ENCODE measurements at regions of chr18 and their contacts with region 1.

Region 1: GRCh38 chr18:12391618-12392165 is 14.7 kb upstream of the AFG3L2 start:
- DNase-seq: peak; percentile 63 to 80 (median 66)
- ATAC-seq: peak; percentile 90
- H3K4me3 ChIP-seq: no peak overlapping the region
- H3K27ac ChIP-seq: no peak overlapping the region
- H3K4me1 ChIP-seq: peaks cover 4 to 6% of the 10 kb centered on the region in 2 experiments; a peak in 3 of 5 replicates
- H3K27me3 ChIP-seq: no peaks in the 10 kb centered on the region
- CTCF ChIP-seq: peak; percentile 86 to 97 (median 96)
- EP300 ChIP-seq: no peak
- POLR2A ChIP-seq: no peak
- RAD21 ChIP-seq: peak; percentile 96 to 98

Region 2: GRCh38 chr18:12271376-12272235 is 120.1 kb before region 1 on chr18:
- CTCF ChIA-PET with region 1: no interaction called
- POLR2A ChIA-PET with region 1: no interaction called
- in situ Hi-C with region 1: no loop called
- intact Hi-C with region 1: no loop called
- DNase-seq: peak; percentile 87 to 89 (median 88)
- ATAC-seq: peak; percentile 99
- H3K4me3 ChIP-seq: peak overlapping the region; percentile 48
- H3K27ac ChIP-seq: peak overlapping the region; percentile 64
- H3K4me1 ChIP-seq: peaks cover 3 to 15% of the 10 kb centered on the region in 2 experiments; a peak in 3 of 5 replicates
- H3K27me3 ChIP-seq: no peaks in the 10 kb centered on the region
- CTCF ChIP-seq: peak; percentile 62 to 93 (median 83)
- EP300 ChIP-seq: no peak
- POLR2A ChIP-seq: peak; percentile 72
- RAD21 ChIP-seq: peak; percentile 58 to 61

Region 3: GRCh38 chr18:12287684-12288402 is 103.8 kb before region 1 on chr18:
- CTCF ChIA-PET with region 1: interaction called, 4 read pairs
- POLR2A ChIA-PET with region 1: no interaction called
- in situ Hi-C with region 1: no loop called
- intact Hi-C with region 1: loop called (anchors 2 kb)
- DNase-seq: peak; percentile 66 to 85 (median 80)
- ATAC-seq: peak; percentile 82
- H3K4me3 ChIP-seq: peak overlapping the region; percentile 33
- H3K27ac ChIP-seq: no peak overlapping the region
- H3K4me1 ChIP-seq: peaks cover 16 to 21% of the 10 kb centered on the region in 2 experiments; a peak in 4 of 5 replicates
- H3K27me3 ChIP-seq: no peaks in the 10 kb centered on the region
- CTCF ChIP-seq: no peak
- EP300 ChIP-seq: no peak
- POLR2A ChIP-seq: no peak
- RAD21 ChIP-seq: no peak

Region 4: DNA sequence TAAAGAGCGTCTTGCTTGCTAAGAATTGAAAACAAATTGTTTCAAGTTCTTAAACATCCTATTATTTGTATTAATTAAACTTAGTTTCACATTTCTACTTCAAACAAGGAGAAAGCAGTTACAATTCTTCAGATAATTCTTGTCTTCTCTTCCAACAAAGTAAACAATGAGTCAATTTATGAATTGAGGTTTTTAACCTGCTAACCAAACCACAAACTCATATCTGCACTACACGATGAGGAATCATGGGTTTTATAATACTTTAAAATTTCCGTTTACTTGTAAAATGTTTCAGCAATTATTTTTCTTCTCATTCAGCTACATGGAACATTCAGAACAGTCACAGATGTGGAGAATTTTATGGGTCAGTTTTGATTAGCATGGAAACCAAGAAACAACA is 152.0 kb after region 1 on chr18:
- CTCF ChIA-PET with region 1: no interaction called
- POLR2A ChIA-PET with region 1: no interaction called
- in situ Hi-C with region 1: no loop called
- intact Hi-C with region 1: loop called (anchors 1 kb)
- DNase-seq: no peak
- ATAC-seq: no peak
- H3K4me3 ChIP-seq: no peak overlapping the region
- H3K27ac ChIP-seq: no peak overlapping the region
- H3K4me1 ChIP-seq: no peaks in the 10 kb centered on the region; a peak in 1 of 5 replicates
- H3K27me3 ChIP-seq: no peaks in the 10 kb centered on the region
- CTCF ChIP-seq: no peak
- EP300 ChIP-seq: no peak
- POLR2A ChIP-seq: no peak
- RAD21 ChIP-seq: no peak

Region 5: DNA sequence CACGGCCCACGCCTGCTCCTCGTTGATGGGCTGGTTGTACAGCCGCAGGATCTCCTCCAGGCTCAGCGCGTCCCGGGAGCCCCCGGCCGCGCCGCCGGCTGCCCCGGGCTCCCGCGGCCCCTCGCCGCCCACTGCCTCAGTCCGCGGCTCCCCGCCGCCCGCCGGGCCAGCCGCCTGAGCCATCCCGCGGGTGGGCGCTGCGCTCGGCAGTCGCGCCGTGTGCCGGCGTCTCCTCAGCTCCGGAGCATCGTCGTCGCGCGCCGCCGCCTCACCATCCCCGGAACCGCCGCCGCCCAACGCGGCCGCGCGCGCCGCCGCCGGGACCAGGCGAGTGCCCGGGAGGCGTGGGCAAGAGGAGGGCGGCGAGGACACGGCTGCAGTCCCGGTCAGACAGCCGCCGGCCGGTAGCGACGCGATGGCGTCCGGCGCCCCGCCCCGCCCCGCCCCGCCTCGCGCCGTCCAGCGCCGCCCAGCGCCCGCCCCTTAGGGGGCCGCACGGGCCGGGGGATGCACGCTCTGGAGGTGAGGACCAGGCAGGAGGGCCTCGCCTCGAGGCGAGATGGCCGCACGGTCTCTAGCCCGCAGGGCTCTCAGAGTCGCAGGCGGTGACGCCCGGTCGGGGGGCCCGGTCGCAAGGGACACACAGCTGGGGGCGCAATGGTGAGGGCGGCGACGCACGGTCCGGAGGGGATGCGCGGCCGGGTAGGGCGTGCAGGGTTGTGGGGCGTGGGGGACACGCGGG is 266.2 kb after region 1 on chr18 and contains the start of gene SPIRE1:
- CTCF ChIA-PET with region 1: interaction called, 50 read pairs
- POLR2A ChIA-PET with region 1: no interaction called
- in situ Hi-C with region 1: no loop called
- intact Hi-C with region 1: loop called (anchors 1 kb)
- DNase-seq: peak; percentile 67 to 83 (median 78)
- ATAC-seq: peak; percentile 79
- H3K4me3 ChIP-seq: peak within 1 kb of the TSS; percentile 60
- H3K27ac ChIP-seq: peak within 1 kb of the TSS; percentile 80
- H3K4me1 ChIP-seq: peaks cover 11 to 16% of the 10 kb centered on the region in 2 experiments; a peak in 4 of 5 replicates
- H3K27me3 ChIP-seq: no peaks in the 10 kb centered on the region
- CTCF ChIP-seq: no peak
- EP300 ChIP-seq: no peak
- POLR2A ChIP-seq: no peak
- RAD21 ChIP-seq: no peak
- polyA plus RNA-seq, gene SPIRE1: 2.9 to 3.3 TPM

Region 6: DNA sequence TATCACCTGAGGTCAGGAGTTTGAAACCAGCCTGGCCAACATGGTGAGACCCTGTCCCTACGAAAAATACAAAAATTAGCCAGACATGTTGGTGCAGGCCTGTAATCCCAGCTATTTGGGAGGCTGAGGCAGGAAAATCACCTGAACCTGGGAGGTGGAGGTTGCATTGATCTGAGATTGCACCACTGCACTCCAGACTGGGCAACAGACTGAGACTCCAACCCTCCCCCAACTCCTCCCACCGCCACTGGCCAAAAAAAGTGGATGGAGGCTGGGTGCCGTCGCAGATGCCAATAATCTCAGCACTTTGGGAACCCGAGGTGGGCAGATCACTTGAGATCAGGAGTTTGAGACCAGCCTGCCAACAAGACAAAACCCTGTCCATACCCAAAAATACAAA is 276.3 kb after region 1 on chr18:
- CTCF ChIA-PET with region 1: no interaction called
- POLR2A ChIA-PET with region 1: no interaction called
- in situ Hi-C with region 1: loop called (anchors 5 kb)
- intact Hi-C with region 1: no loop called
- DNase-seq: no peak
- ATAC-seq: no peak
- H3K4me3 ChIP-seq: no peak overlapping the region
- H3K27ac ChIP-seq: no peak overlapping the region
- H3K4me1 ChIP-seq: no peaks in the 10 kb centered on the region
- H3K27me3 ChIP-seq: no peaks in the 10 kb centered on the region
- CTCF ChIP-seq: no peak
- EP300 ChIP-seq: no peak
- POLR2A ChIP-seq: no peak
- RAD21 ChIP-seq: no peak

Region 7: DNA sequence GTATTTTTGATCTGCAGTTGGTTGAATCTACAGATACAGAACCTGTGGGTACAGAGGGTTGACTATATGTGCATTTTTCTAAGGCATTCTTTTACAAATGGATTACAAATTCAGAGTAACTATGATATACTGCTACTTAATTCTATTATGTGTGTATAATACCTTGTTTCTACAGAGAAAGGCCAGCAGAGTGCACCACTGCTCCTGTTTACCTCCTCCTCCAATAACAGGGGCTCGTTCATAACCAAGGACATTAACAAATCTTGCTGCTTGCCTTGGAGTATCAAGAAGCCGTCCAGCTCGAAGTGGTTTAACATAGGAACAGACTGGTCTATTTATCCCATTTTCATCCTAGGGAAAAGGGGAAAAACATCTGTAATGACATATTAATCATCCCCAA is 294.4 kb after region 1 on chr18:
- CTCF ChIA-PET with region 1: no interaction called
- POLR2A ChIA-PET with region 1: no interaction called
- in situ Hi-C with region 1: no loop called
- intact Hi-C with region 1: no loop called
- DNase-seq: peak in 1 of 4 experiments; percentile 20
- ATAC-seq: peak; percentile 81
- H3K4me3 ChIP-seq: no peak overlapping the region
- H3K27ac ChIP-seq: no peak overlapping the region
- H3K4me1 ChIP-seq: no peaks in the 10 kb centered on the region
- H3K27me3 ChIP-seq: no peaks in the 10 kb centered on the region
- CTCF ChIP-seq: peak; percentile 13 to 36 (median 28); a peak in 1 of 6 replicates
- EP300 ChIP-seq: no peak
- POLR2A ChIP-seq: no peak
- RAD21 ChIP-seq: peak in 1 of 2 experiments; percentile 15; a peak in 1 of 4 replicates

Region 8: GRCh38 chr18:12934454-12935071 is 542.9 kb after region 1 on chr18:
- CTCF ChIA-PET with region 1: interaction called, 7 read pairs
- POLR2A ChIA-PET with region 1: no interaction called
- in situ Hi-C with region 1: no loop called
- intact Hi-C with region 1: loop called (anchors 5 kb)
- DNase-seq: peak; percentile 68 to 89 (median 74)
- ATAC-seq: peak; percentile 95
- H3K4me3 ChIP-seq: no peak overlapping the region
- H3K27ac ChIP-seq: no peak overlapping the region
- H3K4me1 ChIP-seq: no peaks in the 10 kb centered on the region; a peak in 1 of 5 replicates
- H3K27me3 ChIP-seq: no peaks in the 10 kb centered on the region
- CTCF ChIP-seq: peak; percentile 92 to 98 (median 98)
- EP300 ChIP-seq: no peak
- POLR2A ChIP-seq: no peak
- RAD21 ChIP-seq: peak; percentile 95 to 99

Measured in K562 (cell line).